Psoas muscle (tissue), 8 donors: ENCODE measurements at regions of chr3 and their contacts with region 1.

Region 1: GRCh38 chr3:134685929-134686802 is 35.3 kb upstream of the KY start:
- DNase-seq: no peak
- ATAC-seq: peak; percentile 81 to 90 (median 86)
- H3K4me3 ChIP-seq: no peak overlapping the region
- H3K27ac ChIP-seq: peak overlapping the region; percentile 66
- H3K4me1 ChIP-seq: peaks cover 27% of the 10 kb centered on the region
- H3K27me3 ChIP-seq: no peaks in the 10 kb centered on the region
- CTCF ChIP-seq: no peak

Region 2: DNA sequence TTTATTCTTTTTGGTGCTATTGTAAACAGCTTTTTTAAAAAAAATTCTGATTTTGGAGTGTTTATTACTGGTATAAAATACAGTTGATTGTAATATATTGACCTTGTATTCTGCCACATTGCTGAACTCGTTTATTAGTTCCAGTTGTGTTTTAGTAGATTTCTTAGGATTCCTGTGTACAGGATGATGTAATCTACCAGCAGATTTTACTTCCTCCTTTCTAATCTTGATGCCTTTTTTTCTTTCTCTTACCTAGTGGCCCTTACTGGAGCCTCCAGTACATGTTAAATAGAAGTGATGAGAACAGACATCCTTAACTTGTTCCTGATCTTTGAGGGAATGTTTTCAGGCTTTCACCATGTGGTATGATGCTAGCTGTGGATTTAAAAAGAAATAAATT is 35.1 kb after region 1 on chr3:
- intact Hi-C with region 1: loop called in 1 of 2 experiments (anchors 2 kb)
- DNase-seq: no peak
- ATAC-seq: no peak
- H3K4me3 ChIP-seq: no peak overlapping the region
- H3K27ac ChIP-seq: no peak overlapping the region
- H3K4me1 ChIP-seq: peaks cover 41% of the 10 kb centered on the region
- H3K27me3 ChIP-seq: no peaks in the 10 kb centered on the region
- CTCF ChIP-seq: no peak